Natural killer cell (primary cell): ENCODE measurements at regions of chr1 and their contacts with region 1.

Region 1: DNA sequence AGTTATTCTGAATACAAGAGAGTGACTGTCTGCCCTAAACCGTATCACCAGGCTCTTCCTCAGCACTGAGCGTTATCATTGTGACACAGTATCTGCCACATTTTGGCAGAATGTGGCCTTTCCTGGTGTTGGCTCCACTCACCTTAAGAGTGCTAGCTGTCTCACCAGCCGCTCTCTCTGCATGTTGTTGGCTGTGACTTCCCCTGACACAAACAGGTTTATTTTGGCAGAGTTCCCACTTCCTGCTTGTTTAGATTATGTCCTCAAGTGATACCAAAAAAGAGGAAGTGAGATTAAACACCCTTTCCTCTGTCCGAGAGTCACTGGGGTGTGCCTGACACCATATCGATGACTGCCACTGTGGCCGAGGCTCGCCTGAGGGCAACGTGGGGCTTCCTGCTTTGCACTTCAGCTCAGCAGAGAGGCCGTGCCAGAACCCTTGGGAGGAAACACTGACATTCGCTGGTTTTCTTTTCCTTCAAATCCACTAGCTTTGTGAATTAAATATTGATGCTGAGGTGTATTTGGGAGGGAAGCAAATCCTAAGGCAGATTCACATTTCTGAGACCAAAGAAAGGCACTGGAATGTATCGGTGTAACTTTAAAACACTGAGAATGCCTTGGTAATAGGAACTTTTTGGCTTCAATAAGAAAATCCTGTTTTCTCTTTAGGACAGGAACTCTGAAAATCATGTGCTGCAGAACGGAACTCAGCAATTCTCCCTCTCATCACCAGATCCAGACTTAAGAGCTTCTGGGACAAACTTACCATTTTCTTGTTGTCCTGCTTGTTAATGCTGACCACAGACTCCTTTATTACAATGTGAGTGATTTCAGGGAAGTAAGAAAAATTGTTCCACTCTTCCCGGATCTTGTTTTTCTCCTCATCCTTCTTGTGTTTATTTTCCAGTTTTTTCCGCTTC is 102.1 kb downstream of the JAK1 start:
- DNase-seq: peak; percentile 72 to 87
- ATAC-seq: peak; percentile 79 to 96 (median 86)
- H3K4me3 ChIP-seq: no peak overlapping the region
- H3K4me3 Mint-ChIP-seq: peak overlapping the region; percentile 85
- H3K27ac ChIP-seq: peak overlapping the region; percentile 80
- H3K27ac Mint-ChIP-seq: peak overlapping the region; percentile 88 to 93
- H3K4me1 ChIP-seq: peaks cover 52% of the 10 kb centered on the region
- H3K4me1 Mint-ChIP-seq: peaks cover 73 to 85% of the 10 kb centered on the region in 2 donors
- H3K27me3 ChIP-seq: no peaks in the 10 kb centered on the region
- H3K27me3 Mint-ChIP-seq: no peaks in the 10 kb centered on the region
- CTCF ChIP-seq: no peak

Region 2: DNA sequence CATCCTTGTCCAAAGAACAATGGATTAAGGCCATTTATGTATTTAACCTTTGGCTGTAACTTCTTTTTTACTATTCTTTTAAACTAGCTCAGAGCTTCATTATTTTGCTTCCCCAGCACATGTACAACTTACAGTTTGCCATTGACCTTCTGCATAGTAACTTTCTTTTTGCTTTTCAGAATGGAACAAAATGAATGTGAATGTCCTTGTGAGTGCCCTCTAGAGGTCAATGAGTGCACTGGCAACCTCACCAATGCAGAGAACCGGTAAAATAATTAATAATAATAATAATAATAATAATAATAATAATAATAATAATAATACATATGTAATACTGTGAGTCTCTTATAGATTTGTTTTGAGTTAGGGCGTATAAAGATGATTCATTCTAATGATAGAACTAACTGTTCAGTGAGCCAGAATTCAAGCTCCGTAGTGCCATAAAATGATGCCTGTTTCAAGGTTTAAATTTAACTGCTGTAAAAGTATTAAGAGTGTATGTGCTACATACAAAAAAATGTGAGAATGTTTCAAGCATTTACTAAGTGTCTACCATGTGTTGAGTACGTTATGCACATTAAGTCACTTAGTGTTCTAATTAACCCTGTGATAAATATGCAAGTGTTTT is 188.4 kb before region 1 on chr1:
- intact Hi-C with region 1: no loop called
- DNase-seq: peak in 1 of 2 donors; percentile 43
- ATAC-seq: peak in 1 of 3 donors; percentile 36
- H3K4me3 ChIP-seq: no peak overlapping the region
- H3K4me3 Mint-ChIP-seq: no peak overlapping the region
- H3K27ac ChIP-seq: no peak overlapping the region
- H3K27ac Mint-ChIP-seq: no peak overlapping the region
- H3K4me1 ChIP-seq: no peaks in the 10 kb centered on the region
- H3K4me1 Mint-ChIP-seq: no peaks in the 10 kb centered on the region
- H3K27me3 ChIP-seq: no peaks in the 10 kb centered on the region
- H3K27me3 Mint-ChIP-seq: peaks cover 0 to 5% of the 10 kb centered on the region in 2 donors
- CTCF ChIP-seq: peak; percentile 76

Region 3: GRCh38 chr1:64877151-64877550 is 12.9 kb after region 1 on chr1:
- intact Hi-C with region 1: loop called (anchors 1 kb)
- DNase-seq: peak in 1 of 2 donors; percentile 89
- ATAC-seq: peak; percentile 53 to 77 (median 75)
- H3K4me3 ChIP-seq: no peak overlapping the region
- H3K4me3 Mint-ChIP-seq: peak overlapping the region; percentile 85
- H3K27ac ChIP-seq: peak overlapping the region; percentile 32
- H3K27ac Mint-ChIP-seq: peak overlapping the region; percentile 79 to 93
- H3K4me1 ChIP-seq: peaks cover 65% of the 10 kb centered on the region
- H3K4me1 Mint-ChIP-seq: peaks cover 89 to 97% of the 10 kb centered on the region in 2 donors
- H3K27me3 ChIP-seq: no peaks in the 10 kb centered on the region
- H3K27me3 Mint-ChIP-seq: no peaks in the 10 kb centered on the region
- CTCF ChIP-seq: no peak

Region 4: GRCh38 chr1:64912191-64912590 is 47.9 kb after region 1 on chr1:
- intact Hi-C with region 1: no loop called
- DNase-seq: no peak
- ATAC-seq: peak in 1 of 3 donors; percentile 33
- H3K4me3 ChIP-seq: no peak overlapping the region
- H3K4me3 Mint-ChIP-seq: peak overlapping the region; percentile 8
- H3K27ac ChIP-seq: no peak overlapping the region
- H3K27ac Mint-ChIP-seq: peak overlapping the region; percentile 84 to 93
- H3K4me1 ChIP-seq: peaks cover 49% of the 10 kb centered on the region
- H3K4me1 Mint-ChIP-seq: peaks cover 97 to 98% of the 10 kb centered on the region in 2 donors
- H3K27me3 ChIP-seq: no peaks in the 10 kb centered on the region
- H3K27me3 Mint-ChIP-seq: no peaks in the 10 kb centered on the region
- CTCF ChIP-seq: no peak

Region 5: GRCh38 chr1:64923294-64923721 is 59.0 kb after region 1 on chr1:
- intact Hi-C with region 1: loop called (anchors 1 kb)
- DNase-seq: peak; percentile 46 to 55
- ATAC-seq: peak; percentile 61 to 83 (median 78)
- H3K4me3 ChIP-seq: no peak overlapping the region
- H3K4me3 Mint-ChIP-seq: peak overlapping the region; percentile 85
- H3K27ac ChIP-seq: peak overlapping the region; percentile 73
- H3K27ac Mint-ChIP-seq: peak overlapping the region; percentile 84 to 93
- H3K4me1 ChIP-seq: peaks cover 70% of the 10 kb centered on the region
- H3K4me1 Mint-ChIP-seq: peaks cover 95 to 96% of the 10 kb centered on the region in 2 donors
- H3K27me3 ChIP-seq: no peaks in the 10 kb centered on the region
- H3K27me3 Mint-ChIP-seq: no peaks in the 10 kb centered on the region
- CTCF ChIP-seq: no peak

Region 6: DNA sequence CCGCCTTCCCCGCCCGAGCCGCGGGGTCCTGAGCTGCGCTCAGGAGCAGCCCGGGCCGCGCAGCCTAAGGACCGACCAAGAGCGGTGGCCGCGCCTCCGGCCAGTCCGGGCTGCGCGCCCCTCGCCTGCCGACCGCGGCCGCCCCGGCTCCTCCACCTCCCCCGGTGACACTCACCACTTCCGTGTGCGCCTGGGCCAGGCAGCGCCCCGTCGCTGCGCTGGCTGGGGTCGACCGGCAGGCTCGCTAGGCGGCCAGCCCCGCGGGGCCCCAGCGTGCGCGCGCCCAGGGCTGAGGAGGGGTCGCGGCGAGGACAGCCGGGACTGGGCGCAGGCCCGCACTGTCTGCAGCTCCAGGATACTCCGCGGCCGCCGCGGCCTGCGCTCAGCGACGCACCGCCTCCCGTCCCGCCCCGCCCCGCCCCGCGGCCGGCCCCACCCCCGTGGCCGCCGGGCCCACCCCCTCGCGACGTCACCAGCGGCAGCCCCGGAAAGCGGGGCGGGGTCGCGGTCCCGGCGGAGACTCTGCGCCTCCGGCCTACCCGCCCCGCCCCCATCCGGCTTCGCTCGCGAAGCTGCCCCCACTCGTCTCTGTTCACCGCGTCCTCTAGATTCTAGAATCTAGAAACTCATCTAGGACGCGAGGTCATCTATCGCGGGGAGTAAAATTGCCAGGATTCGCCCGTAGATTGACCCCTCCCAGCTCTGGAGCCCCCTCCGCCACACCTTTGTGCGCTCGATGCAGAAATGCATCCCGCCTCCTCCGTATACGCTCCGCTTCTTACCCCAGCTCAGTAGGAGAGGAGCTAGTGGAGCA is 102.1 kb after region 1 on chr1 and contains the start of gene JAK1:
- intact Hi-C with region 1: loop called (anchors 1 kb)
- DNase-seq: peak; percentile 89 to 96
- ATAC-seq: peak; percentile 78 to 90 (median 78)
- H3K4me3 ChIP-seq: peak within 1 kb of the TSS; percentile 76
- H3K4me3 Mint-ChIP-seq: peak within 1 kb of the TSS; percentile 94
- H3K27ac ChIP-seq: peak within 1 kb of the TSS; percentile 89
- H3K27ac Mint-ChIP-seq: peak within 1 kb of the TSS in 1 of 2 donors; percentile 94
- H3K4me1 ChIP-seq: peaks cover 27% of the 10 kb centered on the region
- H3K4me1 Mint-ChIP-seq: peaks cover 50 to 51% of the 10 kb centered on the region in 2 donors
- H3K27me3 ChIP-seq: no peaks in the 10 kb centered on the region
- H3K27me3 Mint-ChIP-seq: no peaks in the 10 kb centered on the region
- CTCF ChIP-seq: no peak
- total RNA-seq, gene JAK1: 507 to 626 (median 526) TPM

Region 7: GRCh38 chr1:65036545-65037180 is 172.4 kb after region 1 on chr1:
- intact Hi-C with region 1: loop called (anchors 1 kb)
- DNase-seq: no peak
- ATAC-seq: no peak
- H3K4me3 ChIP-seq: no peak overlapping the region
- H3K4me3 Mint-ChIP-seq: no peak overlapping the region
- H3K27ac ChIP-seq: no peak overlapping the region
- H3K27ac Mint-ChIP-seq: no peak overlapping the region
- H3K4me1 ChIP-seq: peaks cover 6% of the 10 kb centered on the region
- H3K4me1 Mint-ChIP-seq: peaks cover 8 to 14% of the 10 kb centered on the region in 2 donors
- H3K27me3 ChIP-seq: no peaks in the 10 kb centered on the region
- H3K27me3 Mint-ChIP-seq: no peaks in the 10 kb centered on the region
- CTCF ChIP-seq: no peak